ENCODE measurements at regions of chr6 and their contacts with region 1.

Region 1: DNA sequence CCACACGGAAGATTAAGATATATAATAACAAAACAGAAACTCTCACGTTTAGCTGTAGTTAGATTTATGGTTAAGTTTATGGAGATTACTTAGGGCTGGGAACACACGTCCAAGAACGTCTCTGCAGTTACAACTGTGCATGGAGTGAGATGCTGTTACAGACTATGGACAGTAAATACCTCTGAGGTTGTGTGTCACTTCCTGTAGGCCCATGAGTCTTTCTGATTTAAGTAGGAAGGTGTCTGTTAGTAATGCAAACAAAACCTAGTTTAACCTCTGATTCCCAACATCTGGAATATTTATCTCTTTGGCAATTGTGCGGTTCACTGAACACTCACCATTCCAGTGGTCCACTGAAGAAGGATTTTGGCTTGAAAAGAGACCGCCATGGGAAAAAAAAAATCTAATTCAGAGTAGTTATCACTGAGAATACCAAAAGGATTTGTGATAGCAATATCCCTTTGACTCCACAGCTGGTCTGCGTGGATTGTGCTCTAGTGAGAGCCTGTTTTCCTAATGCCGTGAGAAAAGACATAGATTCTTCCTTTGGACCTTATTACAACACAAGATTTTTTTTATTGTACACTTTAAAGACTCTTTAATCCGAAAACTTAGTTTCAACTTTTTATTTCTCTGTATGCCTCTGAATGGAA is 478.2 kb upstream of the CITED2 start:
- DNase-seq: no peak
- ATAC-seq: no peak
- H3K4me3 ChIP-seq: no peak overlapping the region
- H3K27ac ChIP-seq: no peak overlapping the region
- H3K4me1 ChIP-seq: no peaks in the 10 kb centered on the region
- H3K27me3 ChIP-seq: no peaks in the 10 kb centered on the region
- CTCF ChIP-seq: no peak
- EP300 ChIP-seq: no peak
- POLR2A ChIP-seq: no peak
- RAD21 ChIP-seq: no peak

Region 2: DNA sequence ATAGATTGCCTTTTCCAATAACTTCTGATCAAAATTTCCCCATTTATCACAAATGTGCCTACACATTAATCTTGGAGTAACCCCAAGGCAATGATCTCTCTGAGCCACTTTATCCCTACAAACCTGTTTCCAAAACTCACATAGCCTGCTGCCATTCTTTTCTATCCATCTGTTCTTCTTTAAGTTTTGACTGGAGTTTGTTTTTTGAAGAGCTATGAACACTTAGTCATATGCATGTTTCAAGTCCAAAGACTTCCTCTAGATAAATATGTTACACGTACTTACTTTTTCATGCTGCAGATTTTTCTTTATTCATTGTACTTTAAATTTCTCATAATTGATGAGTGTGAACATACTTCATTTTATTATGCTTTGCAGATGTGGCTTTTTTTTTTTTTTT is 10.7 kb after region 1 on chr6:
- CTCF ChIA-PET with region 1: interaction called, 7 read pairs
- POLR2A ChIA-PET with region 1: no interaction called
- RAD21 ChIA-PET with region 1: interaction called, 5 read pairs
- SMC1A ChIA-PET with region 1: interaction called, 16 read pairs
- in situ Hi-C with region 1: no loop called
- intact Hi-C with region 1: no loop called
- DNase-seq: no peak
- ATAC-seq: no peak
- H3K4me3 ChIP-seq: no peak overlapping the region
- H3K27ac ChIP-seq: no peak overlapping the region
- H3K4me1 ChIP-seq: no peaks in the 10 kb centered on the region
- H3K27me3 ChIP-seq: no peaks in the 10 kb centered on the region
- CTCF ChIP-seq: no peak
- EP300 ChIP-seq: no peak
- POLR2A ChIP-seq: no peak
- RAD21 ChIP-seq: no peak

Region 3: GRCh38 chr6:139872665-139873064 is 20.1 kb after region 1 on chr6:
- CTCF ChIA-PET with region 1: interaction called, 3 read pairs
- POLR2A ChIA-PET with region 1: no interaction called
- RAD21 ChIA-PET with region 1: interaction called, 5 read pairs
- SMC1A ChIA-PET with region 1: interaction called, 24 read pairs
- in situ Hi-C with region 1: no loop called
- intact Hi-C with region 1: no loop called
- DNase-seq: no peak
- ATAC-seq: no peak
- H3K4me3 ChIP-seq: no peak overlapping the region
- H3K27ac ChIP-seq: no peak overlapping the region
- H3K4me1 ChIP-seq: no peaks in the 10 kb centered on the region
- H3K27me3 ChIP-seq: no peaks in the 10 kb centered on the region
- CTCF ChIP-seq: no peak
- EP300 ChIP-seq: no peak
- POLR2A ChIP-seq: no peak
- RAD21 ChIP-seq: no peak

Measured in GM12878 (cell line).